Thyroid gland (tissue), 4 donors: ENCODE measurements at regions of chr6 and their contacts with region 1.

Region 1: DNA sequence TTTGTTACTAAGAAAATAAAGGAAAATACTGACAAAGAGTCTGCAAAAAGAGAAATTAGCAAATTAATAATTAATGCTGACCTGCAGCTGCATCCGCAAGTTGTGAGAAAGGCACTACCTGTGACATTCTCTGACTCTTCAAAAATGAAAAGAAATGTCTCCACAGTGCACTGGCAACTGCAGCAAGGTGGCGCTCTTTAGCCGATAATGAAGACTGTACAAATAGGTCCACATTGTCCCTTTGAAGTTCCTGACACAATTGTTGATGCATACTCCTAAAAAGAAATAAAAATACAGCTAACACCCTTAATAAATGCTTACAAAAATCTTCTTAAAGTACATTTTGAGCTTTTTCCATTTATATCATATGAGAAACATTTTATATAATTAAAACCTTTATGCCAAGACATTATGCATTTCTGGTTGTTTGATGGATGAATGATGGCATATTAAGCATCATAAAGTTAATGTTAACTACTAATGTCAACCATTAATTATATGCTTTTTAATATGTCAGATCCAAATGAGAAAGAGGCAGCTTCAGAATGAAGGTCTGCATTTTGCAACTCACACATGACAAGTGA is 96.5 kb downstream of the MMS22L start:
- DNase-seq: peak; percentile 72 to 76
- H3K4me3 ChIP-seq: no peak overlapping the region
- H3K27ac ChIP-seq: no peak overlapping the region
- H3K4me1 ChIP-seq: no peaks in the 10 kb centered on the region
- H3K27me3 ChIP-seq: no peaks in the 10 kb centered on the region
- CTCF ChIP-seq: peak; percentile 60 to 87 (median 72)
- POLR2A ChIP-seq: no peak

Region 2: DNA sequence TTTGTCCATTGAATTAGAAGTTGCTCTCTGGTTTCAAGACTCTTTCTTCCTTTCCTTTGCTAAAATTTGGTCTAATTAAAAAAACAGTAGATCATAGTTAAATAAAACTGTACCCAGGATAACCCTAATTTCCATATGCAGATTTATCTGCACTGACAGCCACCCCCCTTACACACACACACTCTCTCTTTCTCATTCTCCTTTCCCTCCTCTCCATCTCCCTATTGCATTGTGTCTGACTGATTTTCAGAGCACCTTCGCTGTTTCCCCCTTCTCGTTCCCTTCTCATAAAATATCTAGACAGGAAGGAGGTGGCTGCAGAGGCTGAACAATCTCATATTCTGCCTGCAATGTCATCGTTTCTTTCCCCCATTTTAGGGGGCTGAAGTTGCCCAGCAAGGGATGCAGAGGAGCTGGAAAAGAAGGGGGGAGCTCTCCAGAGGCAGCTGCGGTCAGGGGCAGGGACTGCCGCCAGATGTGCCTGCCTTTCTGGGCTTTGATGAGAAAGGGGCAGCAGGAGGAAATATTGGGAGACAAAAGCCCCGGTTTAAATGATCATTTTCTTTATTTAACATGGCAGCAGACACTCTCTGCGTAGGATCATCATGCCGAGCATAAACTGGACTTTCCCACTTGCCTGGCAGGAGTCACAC is 119.0 kb after region 1 on chr6:
- intact Hi-C with region 1: no loop called
- DNase-seq: no peak
- H3K4me3 ChIP-seq: no peak overlapping the region
- H3K27ac ChIP-seq: no peak overlapping the region
- H3K4me1 ChIP-seq: no peaks in the 10 kb centered on the region
- H3K27me3 ChIP-seq: no peaks in the 10 kb centered on the region
- CTCF ChIP-seq: no peak
- POLR2A ChIP-seq: no peak

Region 3: DNA sequence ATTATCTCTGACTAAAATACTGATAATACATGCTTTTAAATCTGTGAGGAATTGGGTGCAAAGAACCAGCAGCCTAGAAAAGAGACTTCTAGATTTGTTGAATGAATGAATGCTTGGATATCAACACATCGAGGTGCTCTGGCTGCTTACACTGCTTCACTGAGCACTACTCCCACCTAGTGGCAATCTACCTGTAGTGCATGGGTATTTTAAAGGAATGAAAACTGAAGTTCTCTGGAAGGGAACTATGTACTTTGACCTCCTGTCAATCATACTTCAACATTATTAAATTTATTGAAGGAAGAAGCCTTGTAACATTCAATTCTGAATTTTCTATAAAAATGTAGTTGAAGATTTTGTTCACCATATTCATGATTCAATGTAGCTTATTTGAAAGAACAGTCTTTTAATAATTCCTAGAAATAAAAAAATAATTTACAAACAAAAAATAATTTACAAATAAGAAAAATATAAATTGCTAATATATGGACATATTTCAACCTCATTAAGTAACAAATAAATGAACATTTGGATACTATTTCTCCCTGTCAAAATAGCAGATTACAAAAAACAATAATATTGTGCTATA is 207.7 kb after region 1 on chr6:
- intact Hi-C with region 1: loop called (anchors 5 kb)
- DNase-seq: peak; percentile 17 to 24
- H3K4me3 ChIP-seq: no peak overlapping the region
- H3K27ac ChIP-seq: no peak overlapping the region
- H3K4me1 ChIP-seq: no peaks in the 10 kb centered on the region
- H3K27me3 ChIP-seq: no peaks in the 10 kb centered on the region
- CTCF ChIP-seq: peak; percentile 52 to 88 (median 82)
- POLR2A ChIP-seq: no peak